Spleen (tissue), 13 donors: ENCODE measurements at regions of chr7 and their contacts with region 1.

Region 1: GRCh38 chr7:73606801-73607691 is 17.3 kb downstream of the MLXIPL start:
- DNase-seq: peak; percentile 91
- H3K4me3 ChIP-seq: peak overlapping the region in 1 of 8 donors; percentile 31
- H3K27ac ChIP-seq: no peak overlapping the region
- H3K4me1 ChIP-seq: peaks cover 0 to 11% (median 8%) of the 10 kb centered on the region in 6 donors
- H3K27me3 ChIP-seq: peaks cover 0 to 72% (median 20%) of the 10 kb centered on the region in 7 donors
- CTCF ChIP-seq: peak; percentile 77 to 94 (median 90)
- POLR2A ChIP-seq: no peak

Region 2: GRCh38 chr7:73727952-73728351 is 120.9 kb after region 1 on chr7:
- intact Hi-C with region 1: loop called (anchors 2 kb)
- DNase-seq: no peak
- H3K4me3 ChIP-seq: no peak overlapping the region
- H3K27ac ChIP-seq: no peak overlapping the region
- H3K4me1 ChIP-seq: peaks cover 0 to 16% (median 4%) of the 10 kb centered on the region in 6 donors
- H3K27me3 ChIP-seq: peaks cover 0 to 36% (median 5%) of the 10 kb centered on the region in 7 donors
- CTCF ChIP-seq: no peak
- POLR2A ChIP-seq: no peak

Region 3: GRCh38 chr7:73851410-73852234 is 244.6 kb after region 1 on chr7:
- intact Hi-C with region 1: loop called (anchors 10 kb)
- DNase-seq: no peak
- H3K4me3 ChIP-seq: no peak overlapping the region
- H3K27ac ChIP-seq: no peak overlapping the region
- H3K4me1 ChIP-seq: peaks cover 7 to 19% (median 9%) of the 10 kb centered on the region in 6 donors
- H3K27me3 ChIP-seq: peaks cover 0 to 34% (median 0%) of the 10 kb centered on the region in 7 donors
- CTCF ChIP-seq: no peak
- POLR2A ChIP-seq: no peak

Region 4: GRCh38 chr7:73918926-73919693 is 312.1 kb after region 1 on chr7:
- intact Hi-C with region 1: no loop called
- DNase-seq: peak; percentile 67
- H3K4me3 ChIP-seq: no peak overlapping the region
- H3K27ac ChIP-seq: no peak overlapping the region
- H3K4me1 ChIP-seq: peaks cover 0 to 15% (median 0%) of the 10 kb centered on the region in 6 donors
- H3K27me3 ChIP-seq: no peaks in the 10 kb centered on the region
- CTCF ChIP-seq: no peak
- POLR2A ChIP-seq: no peak